ENCODE measurements at regions of chr20 and their contacts with region 1.

Region 1: GRCh38 chr20:38221119-38221589 is 39.4 kb downstream of the KIAA1755 start:
- DNase-seq: peak; percentile 72
- ATAC-seq: peak; percentile 93
- H3K4me3 Mint-ChIP-seq: no peak overlapping the region
- H3K27ac Mint-ChIP-seq: no peak overlapping the region
- H3K4me1 Mint-ChIP-seq: peaks cover 3% of the 10 kb centered on the region
- H3K27me3 Mint-ChIP-seq: peaks cover 4% of the 10 kb centered on the region
- CTCF ChIP-seq: peak; percentile 37

Region 2: GRCh38 chr20:37651932-37652331 is 569.2 kb before region 1 on chr20:
- CTCF ChIA-PET with region 1: no interaction called
- POLR2A ChIA-PET with region 1: no interaction called
- intact Hi-C with region 1: loop called (anchors 1 kb)
- DNase-seq: no peak
- ATAC-seq: peak; percentile 75
- H3K4me3 Mint-ChIP-seq: no peak overlapping the region
- H3K27ac Mint-ChIP-seq: no peak overlapping the region
- H3K4me1 Mint-ChIP-seq: no peaks in the 10 kb centered on the region
- H3K27me3 Mint-ChIP-seq: peaks cover 12% of the 10 kb centered on the region
- CTCF ChIP-seq: no peak

Region 3: DNA sequence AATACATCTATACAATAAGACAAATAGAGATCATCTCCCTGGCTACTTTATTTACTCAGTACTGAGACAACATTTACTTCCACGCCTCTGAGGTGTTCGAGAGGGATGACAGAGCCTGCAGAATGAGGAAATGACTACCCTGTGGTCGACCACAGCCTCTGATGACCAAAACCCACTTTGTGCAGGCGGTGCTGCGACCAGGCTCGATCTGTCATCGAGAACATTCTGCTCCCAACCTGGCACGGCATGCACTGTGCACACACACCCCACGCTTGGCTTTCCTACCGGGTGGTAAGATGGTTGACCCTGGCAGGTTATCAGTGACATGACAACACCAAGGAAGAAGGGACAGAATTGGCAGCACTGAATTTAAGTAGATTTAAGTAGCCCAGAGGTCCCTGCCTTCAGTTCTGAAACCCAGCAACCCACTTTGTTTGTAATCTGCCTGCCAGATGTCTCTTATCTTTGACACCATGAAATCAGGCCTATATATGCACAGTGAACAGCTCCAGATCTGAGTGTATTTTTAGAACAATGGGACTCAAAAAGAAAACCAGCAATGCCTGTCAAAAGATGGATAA is 230.5 kb before region 1 on chr20:
- CTCF ChIA-PET with region 1: interaction called, 18 read pairs
- POLR2A ChIA-PET with region 1: no interaction called
- intact Hi-C with region 1: no loop called
- DNase-seq: peak; percentile 29
- ATAC-seq: peak; percentile 87
- H3K4me3 Mint-ChIP-seq: no peak overlapping the region
- H3K27ac Mint-ChIP-seq: peak overlapping the region; percentile 13
- H3K4me1 Mint-ChIP-seq: peaks cover 20% of the 10 kb centered on the region
- H3K27me3 Mint-ChIP-seq: no peaks in the 10 kb centered on the region
- CTCF ChIP-seq: no peak

Region 4: DNA sequence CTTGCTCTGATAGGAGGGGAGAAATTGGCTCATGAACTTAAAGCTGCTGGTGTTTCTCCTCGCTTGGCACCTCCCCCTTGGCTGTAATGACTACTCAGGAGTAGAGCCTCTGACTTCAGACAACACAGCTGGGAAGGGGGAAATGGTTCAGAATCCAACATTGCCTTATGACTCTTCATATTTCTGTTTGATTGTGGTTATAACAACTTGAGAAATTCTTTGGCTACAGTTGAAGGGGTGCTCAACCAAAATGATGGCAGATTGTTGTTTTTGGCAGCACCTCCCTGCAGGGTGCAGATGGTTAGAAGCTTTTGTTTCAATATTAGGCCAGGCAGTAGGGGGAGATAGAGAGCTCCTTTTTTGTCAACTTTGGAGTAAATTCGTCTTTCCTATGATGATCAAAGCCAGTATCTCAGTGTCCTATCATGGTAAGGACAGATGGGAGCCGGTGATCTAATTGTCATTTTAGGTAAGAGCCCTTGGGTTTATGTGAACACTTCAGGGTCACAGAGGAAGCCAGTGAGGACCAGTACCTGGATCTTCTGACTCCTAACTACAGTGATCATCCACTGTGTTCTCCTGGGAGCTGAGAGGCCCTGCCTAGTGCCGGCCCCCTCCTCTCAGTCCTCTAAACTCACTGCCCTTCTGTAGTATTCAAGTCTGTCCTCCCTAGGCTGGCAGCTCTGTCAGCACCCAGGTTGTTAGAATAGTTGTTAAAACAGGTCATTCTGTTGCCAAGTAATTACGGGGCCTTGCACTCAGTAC is 147.7 kb before region 1 on chr20:
- CTCF ChIA-PET with region 1: interaction called, 81 read pairs
- POLR2A ChIA-PET with region 1: interaction called, 7 read pairs
- intact Hi-C with region 1: loop called (anchors 1 kb)
- DNase-seq: no peak
- ATAC-seq: peak; percentile 55
- H3K4me3 Mint-ChIP-seq: peak overlapping the region; percentile 22
- H3K27ac Mint-ChIP-seq: peak overlapping the region; percentile 65
- H3K4me1 Mint-ChIP-seq: peaks cover 56% of the 10 kb centered on the region
- H3K27me3 Mint-ChIP-seq: no peaks in the 10 kb centered on the region
- CTCF ChIP-seq: peak; percentile 34

Region 5: DNA sequence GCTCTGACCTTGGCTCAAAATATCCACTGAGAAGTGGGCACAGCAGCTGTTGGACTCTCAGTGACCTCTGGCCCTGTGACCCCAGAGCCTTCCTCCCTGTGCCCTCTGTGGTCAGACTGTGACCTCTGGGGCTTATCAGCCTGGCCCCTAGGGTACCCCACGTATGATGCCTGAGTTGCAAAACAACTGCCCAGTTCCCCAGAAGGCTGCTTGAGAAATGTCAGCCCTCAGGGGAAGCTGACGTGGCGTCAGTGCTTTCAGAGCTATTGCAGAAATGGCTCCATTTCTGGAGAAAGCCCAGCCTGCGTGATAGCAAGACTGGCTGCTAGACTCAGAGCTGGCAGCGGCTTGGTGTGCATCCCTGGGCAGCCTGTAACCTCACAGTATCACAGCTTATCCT is 24.6 kb before region 1 on chr20:
- CTCF ChIA-PET with region 1: interaction called, 12 read pairs
- POLR2A ChIA-PET with region 1: interaction called, 3 read pairs
- intact Hi-C with region 1: loop called (anchors 2 kb)
- DNase-seq: peak; percentile 23
- ATAC-seq: peak; percentile 88
- H3K4me3 Mint-ChIP-seq: no peak overlapping the region
- H3K27ac Mint-ChIP-seq: no peak overlapping the region
- H3K4me1 Mint-ChIP-seq: peaks cover 22% of the 10 kb centered on the region
- H3K27me3 Mint-ChIP-seq: peaks cover 8% of the 10 kb centered on the region
- CTCF ChIP-seq: no peak